Cardiac septum (tissue), 1 donor: ENCODE measurements at regions of chr1 and their contacts with region 1.

Region 1: GRCh38 chr1:245156081-245156735 is 1.4 kb downstream of the KIF26B start:
- DNase-seq: peak; percentile 90

Region 2: GRCh38 chr1:245186391-245186790 is 30.2 kb after region 1 on chr1:
- intact Hi-C with region 1: no loop called
- DNase-seq: no peak

Region 3: GRCh38 chr1:245197911-245198379 is 41.7 kb after region 1 on chr1:
- intact Hi-C with region 1: no loop called
- DNase-seq: no peak

Region 4: DNA sequence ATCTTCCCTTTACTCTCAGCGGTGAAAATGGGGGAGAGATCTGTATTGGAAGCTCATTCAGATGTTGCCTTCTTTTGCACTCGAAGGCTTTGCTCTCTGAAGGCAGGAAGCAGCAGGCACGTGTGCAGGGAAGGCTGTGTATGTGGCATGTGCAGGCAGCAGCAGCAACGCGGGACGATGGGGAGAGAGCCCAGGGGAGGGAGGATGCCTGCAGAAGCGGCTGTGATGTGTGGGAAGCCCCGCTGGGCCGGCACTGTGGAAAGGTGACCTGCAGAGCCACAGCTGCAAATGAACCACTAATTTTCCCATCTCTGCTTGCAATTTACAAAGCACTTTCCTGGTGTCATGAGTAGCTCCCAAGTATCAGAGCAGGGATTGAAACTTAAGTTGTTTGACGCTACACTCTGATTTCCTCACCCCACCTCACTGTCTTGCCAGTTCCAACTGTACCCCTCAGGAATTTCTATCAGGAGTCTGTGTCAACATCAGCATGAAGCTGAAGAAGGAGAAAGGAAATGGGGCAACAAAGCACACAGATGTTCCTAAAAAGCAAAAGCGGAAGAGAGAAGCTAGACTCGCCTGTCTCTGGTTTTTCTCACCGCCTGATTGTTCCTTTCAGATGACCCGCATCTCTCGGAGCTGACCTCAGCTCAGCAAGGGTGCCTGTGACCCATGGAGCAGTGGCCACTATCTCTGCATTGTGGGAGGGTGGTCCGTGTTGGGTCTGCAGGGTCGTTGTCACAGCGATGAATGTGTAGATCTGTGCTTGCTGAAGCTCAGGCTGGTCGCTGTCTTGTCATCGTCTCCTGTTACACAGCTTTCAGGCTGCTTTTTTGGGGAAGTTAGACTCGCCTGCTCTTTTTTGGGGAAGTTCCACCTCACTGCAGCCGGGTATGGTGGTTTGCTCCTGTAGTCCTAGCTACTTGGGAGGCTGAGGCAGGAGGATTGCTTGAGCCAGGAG is 154.6 kb after region 1 on chr1:
- intact Hi-C with region 1: no loop called
- DNase-seq: no peak

Region 5: GRCh38 chr1:245380790-245381535 is 224.8 kb after region 1 on chr1:
- intact Hi-C with region 1: loop called (anchors 2 kb)
- DNase-seq: peak; percentile 12

Region 6: GRCh38 chr1:246002725-246003441 is 846.7 kb after region 1 on chr1:
- intact Hi-C with region 1: loop called (anchors 1 kb)
- DNase-seq: peak; percentile 89

Region 7: DNA sequence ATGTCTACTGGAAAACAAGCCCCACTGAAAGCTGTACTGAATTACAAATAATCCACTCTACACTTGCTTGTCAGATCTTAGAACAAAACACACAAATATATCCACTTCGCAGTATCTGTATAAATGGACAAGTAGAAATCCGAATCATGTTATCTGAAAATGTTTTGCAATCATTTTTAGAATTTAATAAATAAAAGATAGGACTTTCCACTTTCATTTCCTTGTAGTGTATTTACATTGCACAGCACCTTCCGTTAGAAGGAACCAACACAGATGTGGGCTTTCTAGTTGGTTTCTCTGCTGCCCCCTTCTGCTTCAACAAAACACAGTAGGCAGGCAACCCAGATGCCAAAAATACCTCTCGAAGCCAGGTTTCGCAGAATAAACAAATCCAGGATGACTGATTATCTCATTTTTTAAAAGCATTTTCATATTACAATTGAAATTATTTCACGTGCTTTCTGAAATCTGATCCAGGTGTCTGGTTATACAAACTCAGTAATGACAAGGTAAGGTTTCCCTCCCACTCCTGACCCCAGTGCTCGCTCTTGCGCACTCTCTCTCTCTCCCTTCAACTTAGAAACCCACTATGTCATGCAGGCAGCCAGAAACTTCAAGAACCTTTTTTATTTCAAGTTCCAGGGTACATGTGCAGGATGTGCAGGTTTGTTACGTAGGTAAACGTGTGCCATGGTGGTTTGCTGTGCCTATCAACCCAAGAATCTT is 961.0 kb after region 1 on chr1:
- intact Hi-C with region 1: loop called (anchors 5 kb)
- DNase-seq: no peak

Region 8: GRCh38 chr1:246450611-246451251 is 1294.5 kb after region 1 on chr1:
- intact Hi-C with region 1: loop called (anchors 10 kb)
- DNase-seq: no peak

Region 9: GRCh38 chr1:246497331-246497915 is 1341.2 kb after region 1 on chr1:
- intact Hi-C with region 1: loop called (anchors 2 kb)
- DNase-seq: no peak